Ascending aorta (tissue), 2 donors: ENCODE measurements at regions of chr6 and their contacts with region 1.

Region 1: GRCh38 chr6:32853541-32854375 is at the starts of genes PSMB9 and TAP1:
- DNase-seq: peak; percentile 89 to 97
- H3K4me3 ChIP-seq: peak within 1 kb of the TSS; percentile 86 to 89
- H3K27ac ChIP-seq: peak within 1 kb of the TSS; percentile 92 to 97
- H3K4me1 ChIP-seq: peaks cover 4 to 9% of the 10 kb centered on the region in 2 donors
- H3K27me3 ChIP-seq: no peaks in the 10 kb centered on the region
- CTCF ChIP-seq: peak; percentile 88 to 95 (median 90)
- total RNA-seq, gene PSMB9: 42.8 TPM
- total RNA-seq, gene TAP1: 51.2 TPM

Region 2: GRCh38 chr6:31203345-31203979 is 1650.3 kb before region 1 on chr6:
- intact Hi-C with region 1: loop called (anchors 10 kb)
- DNase-seq: peak in 1 of 2 donors; percentile 63
- H3K4me3 ChIP-seq: peak overlapping the region; percentile 43 to 56
- H3K27ac ChIP-seq: peak overlapping the region; percentile 61 to 72
- H3K4me1 ChIP-seq: peaks cover 5 to 18% of the 10 kb centered on the region in 2 donors
- H3K27me3 ChIP-seq: no peaks in the 10 kb centered on the region
- CTCF ChIP-seq: no peak

Region 3: GRCh38 chr6:32838114-32838958 is 15.4 kb before region 1 on chr6 and contains the start of gene TAP2:
- intact Hi-C with region 1: loop called (anchors 1 kb)
- DNase-seq: peak; percentile 84 to 98
- H3K4me3 ChIP-seq: peak within 1 kb of the TSS; percentile 79 to 85
- H3K27ac ChIP-seq: peak within 1 kb of the TSS; percentile 93 to 94
- H3K4me1 ChIP-seq: peaks cover 0 to 3% of the 10 kb centered on the region in 2 donors
- H3K27me3 ChIP-seq: no peaks in the 10 kb centered on the region
- CTCF ChIP-seq: peak; percentile 95 to 97 (median 96)
- total RNA-seq, gene TAP2: 26.7 TPM